Activated naive CD4-positive, alpha-beta T cell treated with anti-CD3 and anti-CD28 coated beads for 36 hours (primary cell): ENCODE measurements at regions of chr20 and their contacts with region 1.

Region 1: DNA sequence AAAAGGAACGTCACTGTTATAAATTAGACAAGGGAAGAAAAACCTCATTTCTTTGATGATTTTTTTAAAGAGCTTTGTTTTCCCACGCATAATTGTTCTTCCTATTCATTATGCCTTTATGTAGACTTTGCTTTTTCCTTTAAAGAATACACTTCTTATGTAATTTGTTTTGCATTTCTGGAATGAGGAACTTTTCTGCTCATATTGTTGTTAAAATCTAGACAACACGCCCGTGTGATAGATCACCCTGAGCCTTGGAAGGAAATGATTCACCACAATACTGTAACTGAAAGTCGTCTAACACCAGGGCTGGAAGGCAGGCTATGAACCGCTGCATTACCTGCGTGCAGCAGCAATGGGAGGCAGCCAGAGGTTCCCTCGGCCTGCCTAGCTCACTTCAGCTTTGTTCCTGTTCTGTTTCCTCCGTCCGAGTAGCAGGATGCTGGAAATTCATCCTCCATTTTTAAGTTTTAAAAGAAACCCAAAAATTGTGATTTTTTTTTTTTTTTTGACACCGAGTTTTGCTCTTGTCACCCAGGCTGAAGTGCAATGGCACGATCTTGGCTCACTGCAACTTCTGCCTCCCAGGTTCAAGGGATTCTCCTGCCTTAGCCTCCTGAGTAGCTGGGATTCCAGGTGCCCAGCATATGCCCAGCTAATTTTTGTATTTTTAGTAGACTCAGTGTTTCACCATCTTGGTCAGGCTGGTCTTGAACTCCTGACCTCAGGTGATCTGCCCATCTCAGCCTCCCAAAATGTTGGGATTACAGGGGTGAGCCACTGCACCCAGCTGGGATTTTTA is 49.6 kb upstream of the ZNF217 start:
- DNase-seq: peak; percentile 82
- H3K4me3 Mint-ChIP-seq: peak overlapping the region; percentile 66
- H3K27ac Mint-ChIP-seq: peak overlapping the region; percentile 85
- H3K4me1 Mint-ChIP-seq: peaks cover 40% of the 10 kb centered on the region
- H3K27me3 Mint-ChIP-seq: no peaks in the 10 kb centered on the region

Region 2: GRCh38 chr20:53609491-53610445 is 33.5 kb before region 1 on chr20:
- CTCF ChIA-PET with region 1: no interaction called
- intact Hi-C with region 1: loop called (anchors 1 kb)
- DNase-seq: peak; percentile 91
- H3K4me3 Mint-ChIP-seq: peak overlapping the region; percentile 79
- H3K27ac Mint-ChIP-seq: peak overlapping the region; percentile 98
- H3K4me1 Mint-ChIP-seq: peaks cover 33% of the 10 kb centered on the region
- H3K27me3 Mint-ChIP-seq: no peaks in the 10 kb centered on the region

Region 3: GRCh38 chr20:53660078-53660909 is 17.1 kb after region 1 on chr20:
- CTCF ChIA-PET with region 1: interaction called, 7 read pairs
- intact Hi-C with region 1: loop called (anchors 1 kb)
- DNase-seq: peak; percentile 56
- H3K4me3 Mint-ChIP-seq: peak overlapping the region; percentile 77
- H3K27ac Mint-ChIP-seq: peak overlapping the region; percentile 88
- H3K4me1 Mint-ChIP-seq: peaks cover 61% of the 10 kb centered on the region
- H3K27me3 Mint-ChIP-seq: no peaks in the 10 kb centered on the region

Region 4: DNA sequence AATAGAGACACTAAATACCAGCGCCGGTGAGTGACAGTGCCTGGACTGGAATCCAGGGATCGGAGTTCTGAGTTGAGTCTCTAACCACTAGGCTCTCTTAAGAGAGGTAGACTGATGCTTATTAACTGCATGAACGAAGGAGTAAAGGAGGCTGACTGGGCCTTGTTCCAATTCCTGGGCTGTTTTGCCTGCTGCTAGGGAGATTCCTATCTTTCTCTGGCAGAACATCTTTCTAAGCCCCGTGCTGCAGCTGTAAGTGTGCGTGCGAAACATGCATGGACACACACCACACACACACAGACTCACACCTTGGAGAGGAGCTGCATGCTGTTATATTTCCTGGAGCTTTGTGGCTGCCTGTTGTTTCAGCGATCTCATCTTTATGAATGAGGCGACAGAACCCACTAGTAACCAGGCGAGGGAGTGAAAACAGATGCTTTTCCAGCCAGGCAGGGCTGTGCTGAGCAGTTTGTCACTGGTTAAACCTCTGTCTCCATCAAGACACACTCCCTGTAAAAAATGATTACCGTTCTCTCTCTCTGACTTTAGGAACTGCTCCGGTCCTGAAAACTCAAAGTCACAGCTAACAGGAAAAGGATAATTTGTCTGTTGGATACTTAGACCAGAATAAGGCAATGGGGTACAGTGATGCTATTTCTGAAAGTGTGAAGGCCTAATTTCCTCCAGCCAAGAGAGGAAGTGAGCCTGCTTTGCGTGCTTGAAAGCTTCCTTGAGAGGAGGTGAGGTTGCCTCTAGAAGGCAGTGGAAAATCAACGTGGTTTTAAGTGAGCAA is 107.8 kb after region 1 on chr20:
- CTCF ChIA-PET with region 1: no interaction called
- intact Hi-C with region 1: loop called (anchors 2 kb)
- DNase-seq: peak; percentile 66
- H3K4me3 Mint-ChIP-seq: peak overlapping the region; percentile 32
- H3K27ac Mint-ChIP-seq: peak overlapping the region; percentile 91
- H3K4me1 Mint-ChIP-seq: peaks cover 71% of the 10 kb centered on the region
- H3K27me3 Mint-ChIP-seq: no peaks in the 10 kb centered on the region

Region 5: GRCh38 chr20:53869466-53870258 is 226.4 kb after region 1 on chr20:
- CTCF ChIA-PET with region 1: no interaction called
- intact Hi-C with region 1: loop called (anchors 2 kb)
- DNase-seq: peak; percentile 85
- H3K4me3 Mint-ChIP-seq: peak overlapping the region; percentile 57
- H3K27ac Mint-ChIP-seq: peak overlapping the region; percentile 90
- H3K4me1 Mint-ChIP-seq: peaks cover 67% of the 10 kb centered on the region
- H3K27me3 Mint-ChIP-seq: no peaks in the 10 kb centered on the region